ENCODE measurements at regions of chr12 and their contacts with region 1.

Region 1: GRCh38 chr12:16392846-16393535 is 45.5 kb downstream of the MGST1 start:
- DNase-seq: no peak
- ATAC-seq: no peak

Region 2: GRCh38 chr12:16467272-16467671 is 74.3 kb after region 1 on chr12:
- intact Hi-C with region 1: loop called in 1 of 2 experiments (anchors 5 kb)
- DNase-seq: no peak
- ATAC-seq: no peak

Measured in left cardiac atrium (tissue), 4 donors.